Mammary epithelial cell (primary cell): ENCODE measurements at regions of chr1 and their contacts with region 1.

Region 1: DNA sequence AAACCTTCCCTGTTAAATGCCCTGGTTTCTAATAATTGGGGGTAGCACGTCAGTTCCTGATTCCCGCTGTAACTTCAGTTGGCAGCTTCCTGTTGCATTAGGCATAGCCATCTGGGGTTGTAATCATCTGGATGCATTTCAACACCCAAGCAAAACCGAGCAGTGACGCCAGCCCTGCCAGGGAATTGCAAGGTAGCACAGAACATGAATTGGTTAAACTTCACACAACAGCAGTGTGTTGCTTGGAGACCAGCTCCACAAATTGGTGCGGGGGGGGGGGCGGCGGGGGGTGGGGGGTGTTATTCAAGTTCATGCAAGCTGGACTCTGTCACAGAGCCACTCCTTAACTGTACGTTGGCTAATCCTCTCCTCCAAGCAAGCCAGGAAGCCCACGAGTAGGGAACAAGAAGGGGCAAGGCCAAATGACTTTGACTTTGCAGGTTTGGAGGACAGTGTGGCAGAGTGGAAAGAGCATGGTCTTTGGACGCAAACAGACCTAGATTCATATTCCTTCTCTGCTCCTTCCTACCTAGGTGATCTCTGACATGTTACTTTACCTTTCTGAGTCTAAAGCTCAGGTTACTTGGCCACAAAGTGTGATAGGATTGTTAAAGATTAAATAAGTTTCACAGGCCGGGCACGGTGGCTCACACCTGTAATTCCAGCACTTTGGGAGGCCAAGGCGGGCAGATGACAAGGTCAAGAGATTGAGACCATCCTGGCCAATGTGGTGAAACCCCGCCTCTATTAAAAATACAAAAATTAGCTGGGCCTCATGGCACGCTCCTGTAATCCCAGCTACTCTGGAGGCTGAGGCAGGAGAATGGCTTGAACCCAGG is 4.7 kb downstream of the LAX1 start:
- DNase-seq: peak; percentile 94
- H3K4me3 ChIP-seq: no peak overlapping the region
- H3K27ac ChIP-seq: peak overlapping the region; percentile 79
- H3K4me1 ChIP-seq: peaks cover 16% of the 10 kb centered on the region
- H3K27me3 ChIP-seq: no peaks in the 10 kb centered on the region
- CTCF ChIP-seq: no peak

Region 2: GRCh38 chr1:203440771-203441170 is 329.0 kb before region 1 on chr1:
- CTCF ChIA-PET with region 1: no interaction called
- dilution Hi-C with region 1: no loop called
- in situ Hi-C with region 1: no loop called
- intact Hi-C with region 1: no loop called
- DNase-seq: peak; percentile 30
- H3K4me3 ChIP-seq: no peak overlapping the region
- H3K27ac ChIP-seq: no peak overlapping the region
- H3K4me1 ChIP-seq: no peaks in the 10 kb centered on the region
- H3K27me3 ChIP-seq: peaks cover 2% of the 10 kb centered on the region
- CTCF ChIP-seq: peak; percentile 12 to 58

Region 3: DNA sequence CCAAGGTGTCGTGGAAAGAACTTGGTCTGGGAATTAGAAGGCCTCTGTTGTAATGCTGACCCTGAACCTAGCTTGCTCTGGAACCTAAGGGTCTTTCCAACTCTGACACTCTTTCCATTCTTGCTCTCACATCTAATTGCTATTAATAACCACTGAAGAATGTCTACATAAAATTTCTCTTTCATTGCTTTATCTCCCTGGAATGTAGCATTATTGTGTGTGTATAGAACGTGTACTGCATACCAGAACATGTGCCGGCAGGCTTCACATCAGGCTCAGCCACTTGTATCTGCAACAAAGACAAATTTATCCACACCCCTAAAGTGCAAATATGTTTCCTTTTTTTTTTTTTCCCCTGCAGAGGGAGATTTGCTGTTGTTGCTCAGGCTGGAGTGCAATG is 18.7 kb before region 1 on chr1:
- CTCF ChIA-PET with region 1: no interaction called
- dilution Hi-C with region 1: no loop called
- in situ Hi-C with region 1: no loop called
- intact Hi-C with region 1: loop called (anchors 1 kb)
- DNase-seq: peak; percentile 88
- H3K4me3 ChIP-seq: no peak overlapping the region
- H3K27ac ChIP-seq: peak overlapping the region; percentile 84
- H3K4me1 ChIP-seq: peaks cover 35% of the 10 kb centered on the region
- H3K27me3 ChIP-seq: no peaks in the 10 kb centered on the region
- CTCF ChIP-seq: peak in 1 of 2 donors; percentile 22